ENCODE measurements at regions of chr1 and their contacts with region 1.

Region 1: GRCh38 chr1:221886743-221887413 is 145.0 kb upstream of the DUSP10 start:
- DNase-seq: peak; percentile 100
- ATAC-seq: peak; percentile 96
- H3K4me3 ChIP-seq: peak overlapping the region; percentile 38
- H3K27ac ChIP-seq: peak overlapping the region; percentile 72
- H3K4me1 ChIP-seq: peaks cover 33% of the 10 kb centered on the region
- H3K27me3 ChIP-seq: no peaks in the 10 kb centered on the region
- CTCF ChIP-seq: peak; percentile 49

Region 2: DNA sequence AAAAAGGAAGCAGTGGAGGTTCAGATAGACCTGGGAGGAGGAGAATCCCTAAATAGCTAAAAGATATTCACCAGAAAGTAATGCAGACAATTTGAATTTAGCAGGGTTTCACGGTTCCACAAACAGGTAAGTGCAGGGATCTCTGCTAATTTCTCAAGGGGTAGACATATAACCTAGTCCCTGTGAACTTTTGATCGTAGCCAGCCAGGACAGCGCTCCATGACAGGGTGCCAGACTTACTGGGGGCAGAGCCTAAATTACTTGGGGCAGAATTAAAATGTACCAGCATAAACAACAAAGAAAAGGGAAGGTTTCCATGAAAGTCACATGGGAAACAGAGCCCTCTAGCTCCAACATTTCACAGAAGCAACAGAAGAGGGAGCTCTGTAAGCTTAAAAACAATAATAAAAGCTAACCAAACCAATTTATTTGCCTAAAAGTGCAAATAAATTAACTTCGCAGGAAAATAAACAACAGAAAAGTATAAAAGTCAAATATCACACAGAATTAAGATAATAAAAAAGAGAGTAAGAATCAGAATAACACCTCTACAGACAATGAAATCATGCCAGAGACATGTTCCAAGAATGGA is 343.3 kb before region 1 on chr1:
- CTCF ChIA-PET with region 1: no interaction called
- POLR2A ChIA-PET with region 1: no interaction called
- intact Hi-C with region 1: loop called (anchors 5 kb)
- DNase-seq: peak; percentile 60
- ATAC-seq: peak; percentile 48; the same call in 1 of the 2 replicates
- H3K4me3 ChIP-seq: no peak overlapping the region
- H3K27ac ChIP-seq: no peak overlapping the region
- H3K4me1 ChIP-seq: peaks cover 5% of the 10 kb centered on the region; the same call in 1 of the 2 replicates
- H3K27me3 ChIP-seq: no peaks in the 10 kb centered on the region
- CTCF ChIP-seq: peak; percentile 87

Region 3: GRCh38 chr1:221829327-221830015 is 57.4 kb before region 1 on chr1:
- CTCF ChIA-PET with region 1: no interaction called
- POLR2A ChIA-PET with region 1: no interaction called
- intact Hi-C with region 1: no loop called
- DNase-seq: peak; percentile 82
- ATAC-seq: peak; percentile 92
- H3K4me3 ChIP-seq: peak overlapping the region; percentile 3; the same call in 1 of the 2 replicates
- H3K27ac ChIP-seq: peak overlapping the region; percentile 57
- H3K4me1 ChIP-seq: peaks cover 36% of the 10 kb centered on the region
- H3K27me3 ChIP-seq: no peaks in the 10 kb centered on the region
- CTCF ChIP-seq: no peak

Region 4: DNA sequence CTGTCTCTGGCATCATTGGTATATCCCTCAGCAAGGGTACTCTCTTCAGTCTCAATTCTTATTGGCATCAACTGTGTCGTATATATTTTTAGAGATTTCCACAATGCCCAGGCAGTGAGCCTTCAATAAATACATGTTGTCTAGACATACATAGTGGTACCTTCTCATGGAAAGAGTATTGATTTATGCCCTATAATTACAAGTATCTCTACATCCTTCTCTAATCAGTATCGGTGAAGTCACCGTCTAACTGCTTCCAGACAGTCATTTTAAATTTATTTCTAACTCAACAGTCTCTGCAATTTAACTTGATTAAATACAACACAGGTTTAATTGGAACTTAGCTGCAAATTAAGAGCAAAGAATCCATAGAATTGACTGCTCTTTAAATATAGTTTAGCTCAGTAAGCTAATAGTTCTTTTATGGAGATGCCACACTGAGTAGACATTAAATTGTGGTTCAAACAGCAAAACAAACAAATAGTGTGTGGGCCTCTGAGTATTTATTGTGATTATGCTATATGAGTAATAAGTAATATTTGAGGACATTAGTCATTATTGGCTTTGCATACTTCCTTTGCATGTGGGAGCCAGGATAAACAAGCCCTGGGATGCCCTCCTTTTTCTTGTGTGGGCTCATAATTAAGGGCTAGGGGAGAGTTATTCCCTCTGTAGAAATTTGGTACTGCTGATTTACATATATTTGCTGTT is 18.1 kb before region 1 on chr1:
- CTCF ChIA-PET with region 1: no interaction called
- POLR2A ChIA-PET with region 1: no interaction called
- intact Hi-C with region 1: loop called (anchors 1 kb)
- DNase-seq: peak; percentile 93
- ATAC-seq: peak; percentile 93
- H3K4me3 ChIP-seq: peak overlapping the region; percentile 19; the same call in 1 of the 2 replicates
- H3K27ac ChIP-seq: peak overlapping the region; percentile 61
- H3K4me1 ChIP-seq: peaks cover 23% of the 10 kb centered on the region
- H3K27me3 ChIP-seq: no peaks in the 10 kb centered on the region
- CTCF ChIP-seq: no peak

Region 5: GRCh38 chr1:221961532-221962292 is 74.8 kb after region 1 on chr1:
- CTCF ChIA-PET with region 1: interaction called, 7 read pairs
- POLR2A ChIA-PET with region 1: interaction called, 3 read pairs
- intact Hi-C with region 1: loop called (anchors 1 kb)
- DNase-seq: peak; percentile 93
- ATAC-seq: peak; percentile 50
- H3K4me3 ChIP-seq: peak overlapping the region; percentile 27; the same call in 1 of the 2 replicates
- H3K27ac ChIP-seq: peak overlapping the region; percentile 74
- H3K4me1 ChIP-seq: peaks cover 65% of the 10 kb centered on the region
- H3K27me3 ChIP-seq: no peaks in the 10 kb centered on the region
- CTCF ChIP-seq: no peak

Region 6: GRCh38 chr1:222105393-222105737 is 218.5 kb after region 1 on chr1:
- CTCF ChIA-PET with region 1: no interaction called
- POLR2A ChIA-PET with region 1: no interaction called
- intact Hi-C with region 1: loop called (anchors 10 kb)
- DNase-seq: peak; percentile 86
- ATAC-seq: peak; percentile 92
- H3K4me3 ChIP-seq: no peak overlapping the region
- H3K27ac ChIP-seq: no peak overlapping the region
- H3K4me1 ChIP-seq: peaks cover 16% of the 10 kb centered on the region
- H3K27me3 ChIP-seq: 0 out of 2 replicates have a peak, but pooled peaks cover 6% of the 10 kb centered on the region
- CTCF ChIP-seq: peak; percentile 31; the same call in 1 of the 2 replicates

Measured in PC-3 (cell line).